Sciatic nerve (tissue), 2 donors: ENCODE measurements at regions of chr7 and their contacts with region 1.

Region 1: DNA sequence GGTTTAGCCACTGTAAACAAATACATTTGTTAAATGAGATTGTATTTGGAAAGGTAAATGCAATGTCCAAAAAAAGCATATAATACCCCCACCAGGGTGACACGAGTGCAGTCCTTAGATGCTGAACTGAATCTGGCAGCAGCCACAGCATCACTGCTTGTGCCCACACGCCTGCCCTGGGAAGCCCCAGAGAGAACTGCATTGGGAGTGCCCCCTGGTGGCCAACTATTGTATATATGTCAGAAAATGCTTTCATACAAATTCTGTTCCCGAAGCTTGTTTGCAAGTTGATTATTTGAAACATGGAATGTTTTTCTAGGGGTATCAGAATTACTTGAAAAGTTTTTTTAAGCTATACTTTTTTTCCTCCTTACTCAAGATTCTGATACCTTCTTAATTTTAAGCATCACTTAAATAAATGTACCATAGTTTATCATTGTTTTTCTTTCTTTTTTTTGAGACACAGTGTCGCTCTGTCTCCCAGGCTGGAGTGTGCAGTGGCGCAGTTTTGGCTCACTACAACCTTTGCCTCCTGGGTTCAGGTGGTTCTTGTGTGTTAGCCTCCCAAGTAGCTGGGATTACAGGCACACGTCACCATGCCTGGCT is 50.1 kb downstream of the LANCL2 start:
- DNase-seq: peak; percentile 88
- ATAC-seq: peak; percentile 83

Region 2: GRCh38 chr7:55279080-55279845 is 136.0 kb before region 1 on chr7:
- intact Hi-C with region 1: loop called (anchors 5 kb)
- DNase-seq: no peak
- ATAC-seq: peak; percentile 26

Region 3: GRCh38 chr7:55723621-55723941 is 308.3 kb after region 1 on chr7:
- intact Hi-C with region 1: no loop called
- DNase-seq: no peak
- ATAC-seq: peak; percentile 17

Region 4: GRCh38 chr7:57165285-57165899 is 1750.1 kb after region 1 on chr7:
- intact Hi-C with region 1: no loop called
- DNase-seq: no peak
- ATAC-seq: no peak